ENCODE measurements at regions of chr13 and their contacts with region 1.

Region 1: DNA sequence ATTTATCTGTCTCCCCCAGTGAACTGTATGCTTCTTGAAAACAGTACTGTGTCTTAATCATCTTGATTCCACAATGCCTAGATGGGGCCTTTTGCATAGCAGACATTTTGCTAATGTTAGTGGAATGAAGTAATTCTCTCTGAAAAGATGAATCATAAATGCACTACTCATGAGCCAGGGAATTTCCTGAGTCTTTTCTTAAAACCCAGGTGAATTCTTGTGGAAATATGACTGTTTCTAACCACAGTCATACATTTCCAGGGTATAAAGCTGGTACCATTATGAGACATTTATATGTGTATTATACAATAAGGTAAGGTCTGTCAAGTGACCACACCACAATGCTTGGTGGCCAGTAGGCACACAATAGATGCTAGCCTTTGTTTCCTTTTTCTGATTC is 5.5 kb upstream of the KCTD4 start:
- DNase-seq: peak; percentile 33
- H3K4me3 Mint-ChIP-seq: no peak overlapping the region
- H3K27ac Mint-ChIP-seq: peak overlapping the region; percentile 37
- H3K4me1 Mint-ChIP-seq: peaks cover 31% of the 10 kb centered on the region
- H3K27me3 Mint-ChIP-seq: no peaks in the 10 kb centered on the region

Region 2: GRCh38 chr13:44906713-44907112 is 299.6 kb before region 1 on chr13:
- CTCF ChIA-PET with region 1: no interaction called
- intact Hi-C with region 1: no loop called
- DNase-seq: no peak
- H3K4me3 Mint-ChIP-seq: no peak overlapping the region
- H3K27ac Mint-ChIP-seq: no peak overlapping the region
- H3K4me1 Mint-ChIP-seq: no peaks in the 10 kb centered on the region
- H3K27me3 Mint-ChIP-seq: no peaks in the 10 kb centered on the region

Region 3: GRCh38 chr13:45178349-45179162 is 27.8 kb before region 1 on chr13:
- CTCF ChIA-PET with region 1: no interaction called
- intact Hi-C with region 1: no loop called
- DNase-seq: no peak
- H3K4me3 Mint-ChIP-seq: no peak overlapping the region
- H3K27ac Mint-ChIP-seq: no peak overlapping the region
- H3K4me1 Mint-ChIP-seq: peaks cover 33% of the 10 kb centered on the region
- H3K27me3 Mint-ChIP-seq: no peaks in the 10 kb centered on the region

Region 4: DNA sequence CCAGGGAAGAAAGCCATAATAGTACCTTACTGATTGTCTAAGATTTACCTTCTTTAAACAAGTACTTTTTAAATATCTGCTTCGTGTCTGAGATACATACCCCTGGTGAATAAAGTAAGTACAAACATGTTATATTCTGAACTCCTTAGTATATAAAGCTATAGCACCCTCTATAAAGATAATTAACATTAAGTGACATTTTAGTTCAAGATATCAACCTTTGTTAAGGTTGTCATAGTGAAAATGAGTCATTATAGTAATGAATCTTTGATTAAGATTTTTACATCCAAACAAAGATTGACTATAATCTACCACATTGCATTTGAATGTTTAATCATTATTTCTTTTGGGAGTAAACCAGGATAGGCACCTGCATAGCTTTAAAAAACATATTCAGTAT is 49.9 kb after region 1 on chr13:
- CTCF ChIA-PET with region 1: no interaction called
- intact Hi-C with region 1: loop called (anchors 1 kb)
- DNase-seq: no peak
- H3K4me3 Mint-ChIP-seq: no peak overlapping the region
- H3K27ac Mint-ChIP-seq: no peak overlapping the region
- H3K4me1 Mint-ChIP-seq: peaks cover 31% of the 10 kb centered on the region
- H3K27me3 Mint-ChIP-seq: no peaks in the 10 kb centered on the region

Region 5: DNA sequence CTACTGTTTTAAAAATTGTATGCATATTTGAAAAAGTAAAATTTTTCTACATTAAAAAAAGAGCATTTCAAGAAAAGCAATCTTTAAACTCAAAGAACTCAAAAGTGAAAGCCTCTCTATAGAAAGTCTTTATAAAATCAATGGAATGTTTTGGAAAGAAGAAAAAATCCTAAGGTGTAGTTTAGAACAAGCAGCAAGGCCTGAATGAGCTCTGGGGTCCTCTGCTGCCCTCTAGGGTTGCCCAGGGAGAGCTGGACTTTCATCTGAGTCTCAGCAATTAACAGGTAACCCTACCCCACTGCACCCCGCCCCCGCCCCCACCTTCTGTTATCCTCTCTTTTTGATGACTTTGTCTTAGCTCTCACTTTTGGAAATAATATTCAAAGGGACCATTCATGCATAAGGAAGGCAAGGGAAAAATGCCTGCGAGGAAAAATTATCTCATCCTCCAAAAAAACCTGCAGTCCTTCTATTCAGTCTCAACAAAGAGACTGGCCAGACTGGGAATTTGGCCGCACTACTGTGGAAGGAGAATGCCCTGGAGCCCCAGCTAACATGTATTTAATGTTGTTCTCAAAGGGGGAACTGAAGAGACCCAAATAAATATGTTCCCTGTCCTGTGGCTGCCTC is 187.7 kb after region 1 on chr13:
- CTCF ChIA-PET with region 1: no interaction called
- intact Hi-C with region 1: loop called (anchors 2 kb)
- DNase-seq: peak; percentile 61
- H3K4me3 Mint-ChIP-seq: no peak overlapping the region
- H3K27ac Mint-ChIP-seq: no peak overlapping the region
- H3K4me1 Mint-ChIP-seq: peaks cover 47% of the 10 kb centered on the region
- H3K27me3 Mint-ChIP-seq: no peaks in the 10 kb centered on the region

Measured in activated naive CD4-positive, alpha-beta T cell treated with anti-CD3 and anti-CD28 coated beads for 36 hours (primary cell).